ENCODE measurements at regions of chr10 and their contacts with region 1.

Region 1: DNA sequence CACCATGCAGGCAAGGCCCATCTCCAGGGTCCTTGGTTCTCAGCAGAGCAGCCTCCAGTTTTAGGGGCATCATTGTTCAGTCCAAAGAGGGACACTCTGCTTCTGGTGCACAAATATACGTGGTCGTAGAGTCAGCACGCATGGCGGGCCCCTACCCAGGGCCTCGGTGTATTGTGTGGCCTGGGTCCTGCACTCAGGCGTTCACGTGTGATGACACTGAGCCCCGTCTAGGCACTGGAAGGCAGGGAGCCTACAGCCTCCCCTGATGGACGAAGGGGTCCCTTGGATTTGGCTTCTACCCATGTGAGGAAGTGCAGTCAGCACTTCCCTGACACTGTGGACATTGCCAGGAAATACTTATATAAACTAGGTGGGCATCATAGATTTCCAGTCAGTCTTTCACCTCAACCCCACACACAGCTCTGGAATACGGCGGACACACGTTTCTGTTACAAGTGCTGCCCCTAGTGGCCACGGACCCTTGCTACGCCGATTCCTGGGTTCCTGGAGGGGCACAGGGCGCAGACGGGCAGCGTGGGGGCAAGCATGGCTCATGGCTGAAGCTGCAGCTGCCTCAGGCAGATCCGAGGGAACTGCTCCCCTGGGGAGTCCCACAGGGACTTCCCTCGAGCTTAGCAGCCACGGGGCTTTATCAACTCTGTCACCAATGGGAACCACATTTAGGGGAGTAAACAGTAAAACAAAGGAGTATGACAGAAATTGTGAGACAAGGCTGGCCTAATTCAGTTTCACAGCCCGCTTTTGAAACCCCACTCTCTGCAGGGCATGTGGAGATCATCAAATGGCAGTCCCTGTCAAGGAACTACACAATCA is 25.4 kb downstream of the AIFM2 start:
- DNase-seq: peak; percentile 85
- ATAC-seq: peak; percentile 99
- H3K4me3 Mint-ChIP-seq: no peak overlapping the region
- H3K27ac Mint-ChIP-seq: no peak overlapping the region
- H3K4me1 Mint-ChIP-seq: peaks cover 11% of the 10 kb centered on the region
- H3K27me3 Mint-ChIP-seq: no peaks in the 10 kb centered on the region
- CTCF ChIP-seq: peak; percentile 70

Region 2: GRCh38 chr10:70078329-70078728 is 28.8 kb before region 1 on chr10:
- CTCF ChIA-PET with region 1: interaction called, 18 read pairs
- POLR2A ChIA-PET with region 1: no interaction called
- DNase-seq: no peak
- ATAC-seq: no peak
- H3K4me3 Mint-ChIP-seq: no peak overlapping the region
- H3K27ac Mint-ChIP-seq: no peak overlapping the region
- H3K4me1 Mint-ChIP-seq: peaks cover 20% of the 10 kb centered on the region
- H3K27me3 Mint-ChIP-seq: no peaks in the 10 kb centered on the region
- CTCF ChIP-seq: no peak

Region 3: GRCh38 chr10:70122742-70123141 is 15.6 kb after region 1 on chr10:
- CTCF ChIA-PET with region 1: interaction called, 10 read pairs
- POLR2A ChIA-PET with region 1: no interaction called
- DNase-seq: no peak
- ATAC-seq: no peak
- H3K4me3 Mint-ChIP-seq: no peak overlapping the region
- H3K27ac Mint-ChIP-seq: no peak overlapping the region
- H3K4me1 Mint-ChIP-seq: peaks cover 6% of the 10 kb centered on the region; the same call in 1 of the 2 replicates
- H3K27me3 Mint-ChIP-seq: no peaks in the 10 kb centered on the region
- CTCF ChIP-seq: no peak

Measured in WTC11 (cell line).